ENCODE measurements at regions of chr5 and their contacts with region 1.

Region 1: DNA sequence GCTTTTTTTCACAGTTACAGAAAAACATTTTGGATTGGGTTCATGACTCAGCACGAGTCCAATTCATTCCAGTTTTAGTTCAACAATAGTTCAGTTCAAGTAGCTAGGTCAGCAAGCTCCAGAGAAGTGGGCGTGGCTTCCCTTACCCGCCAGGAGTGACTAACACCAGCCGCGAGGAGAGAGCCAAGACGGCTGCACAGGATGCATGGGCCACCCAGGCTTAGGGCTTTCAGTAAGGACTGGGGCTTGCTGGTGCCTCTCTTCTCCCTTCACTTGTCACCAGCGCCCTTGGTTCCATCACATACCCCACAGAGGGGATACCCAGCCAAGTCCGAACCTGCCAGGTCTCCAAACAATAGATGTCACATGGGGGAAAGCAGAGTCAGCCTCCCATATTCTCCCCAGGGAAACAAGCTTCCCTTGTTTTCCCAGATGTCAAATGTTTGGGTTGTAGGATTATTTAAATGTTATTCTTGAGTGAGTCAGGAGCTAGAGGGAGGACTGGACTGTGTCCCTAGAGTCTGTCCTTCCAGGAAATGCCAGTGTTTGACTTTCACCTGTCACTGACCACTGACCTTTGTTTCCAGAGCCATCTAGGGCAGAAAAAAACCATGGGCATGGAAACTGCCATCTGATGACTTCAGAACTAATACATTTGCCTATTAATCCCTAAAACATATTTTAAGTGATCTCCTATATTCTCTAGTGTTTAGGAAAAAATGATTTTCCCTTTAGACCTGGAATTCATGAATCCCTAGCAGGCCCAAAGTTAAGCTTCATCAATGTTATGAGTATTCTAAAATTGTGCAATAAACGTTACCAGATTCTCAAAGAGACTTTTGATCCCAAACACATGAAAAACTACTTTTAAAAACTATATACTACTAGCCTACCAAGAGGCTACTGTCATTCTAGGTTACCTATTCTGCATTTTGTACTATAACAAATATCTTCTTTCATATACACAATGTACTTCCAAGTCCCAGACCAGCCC is 51.9 kb downstream of the NIPAL4 start:
- DNase-seq: peak; percentile 94
- H3K4me3 ChIP-seq: peak overlapping the region; percentile 15; the same call in 1 of the 2 replicates
- H3K27ac ChIP-seq: peak overlapping the region; percentile 96
- H3K27me3 ChIP-seq: no peaks in the 10 kb centered on the region
- CTCF ChIP-seq: no peak

Region 2: DNA sequence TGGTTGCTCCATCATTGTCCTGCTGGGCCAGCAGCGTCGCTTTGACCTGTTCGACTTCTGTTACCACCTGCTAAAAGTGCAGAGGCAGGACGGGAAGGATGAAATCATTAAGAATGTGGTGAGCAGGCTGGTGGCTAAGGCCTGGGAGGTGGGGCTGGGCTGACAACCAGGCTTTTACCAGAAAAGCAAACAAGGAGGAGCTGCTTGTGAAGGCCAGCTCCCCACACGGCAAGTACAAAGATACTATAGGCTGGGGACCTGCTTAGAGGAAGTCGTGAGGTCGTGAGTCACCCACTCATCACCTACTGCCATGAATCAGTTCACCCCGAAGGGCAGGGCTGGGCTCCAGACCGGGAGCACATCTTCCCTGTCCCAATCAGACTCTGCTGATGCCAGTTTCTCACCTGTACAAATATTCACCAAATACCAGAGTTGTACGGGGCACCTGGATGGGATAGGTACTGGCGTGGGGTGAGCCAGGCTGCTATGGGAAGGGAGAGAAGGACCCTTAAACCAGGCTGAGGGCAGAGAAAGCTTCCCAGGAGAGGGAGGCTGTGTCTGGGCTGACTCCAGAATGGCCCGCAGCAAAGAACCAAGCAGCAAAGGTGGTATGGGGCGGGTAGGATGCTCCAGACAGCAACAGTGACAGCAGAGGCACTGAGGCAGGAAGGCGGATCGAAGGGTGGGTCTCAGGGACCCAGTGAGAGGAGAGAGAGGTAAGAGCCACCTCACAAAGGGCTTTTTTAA is 121.2 kb before region 1 on chr5:
- CTCF ChIA-PET with region 1: no interaction called
- POLR2A ChIA-PET with region 1: no interaction called
- DNase-seq: peak; percentile 44
- H3K4me3 ChIP-seq: no peak overlapping the region
- H3K27ac ChIP-seq: peak overlapping the region; percentile 57
- H3K27me3 ChIP-seq: no peaks in the 10 kb centered on the region
- CTCF ChIP-seq: no peak

Region 3: GRCh38 chr5:157543825-157544622 is 32.1 kb after region 1 on chr5:
- CTCF ChIA-PET with region 1: interaction called, 4 read pairs
- POLR2A ChIA-PET with region 1: interaction called, 13 read pairs
- DNase-seq: peak; percentile 75
- H3K4me3 ChIP-seq: no peak overlapping the region
- H3K27ac ChIP-seq: peak overlapping the region; percentile 92
- H3K27me3 ChIP-seq: no peaks in the 10 kb centered on the region
- CTCF ChIP-seq: no peak